Gastrocnemius medialis (tissue), 4 donors: ENCODE measurements at regions of chr2 and their contacts with region 1.

Region 1: DNA sequence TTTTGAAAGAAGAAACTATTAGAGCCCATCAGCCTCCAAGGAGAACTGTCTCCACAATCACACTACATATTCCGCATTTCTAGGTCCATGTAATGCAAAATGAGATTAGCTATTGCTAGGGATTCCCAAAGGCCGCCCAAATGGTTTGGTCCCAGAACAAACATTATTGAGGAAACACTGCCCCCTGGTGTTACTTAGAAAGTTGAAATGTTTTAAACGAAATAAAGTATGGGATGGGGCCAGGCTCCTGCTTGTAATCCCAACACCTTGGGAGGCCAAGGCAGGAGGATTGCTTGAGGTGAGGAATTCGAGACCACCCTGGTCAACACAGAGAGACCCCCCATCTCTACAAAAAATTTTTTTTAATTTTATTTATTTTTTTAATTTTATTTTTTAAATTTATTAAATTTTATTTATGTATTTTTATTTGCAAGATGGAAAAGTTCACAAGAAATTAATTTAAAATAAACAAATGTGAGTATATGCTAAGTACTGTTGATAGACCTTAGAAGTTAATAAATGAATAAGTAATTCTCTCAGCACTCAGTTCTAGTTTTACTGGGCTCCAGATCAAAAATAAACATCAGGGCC is 5.5 kb downstream of the NHEJ1 start:
- DNase-seq: no peak
- ATAC-seq: peak; percentile 41 to 66
- H3K4me3 ChIP-seq: no peak overlapping the region
- H3K27ac ChIP-seq: no peak overlapping the region
- H3K4me1 ChIP-seq: peaks cover 5 to 6% of the 10 kb centered on the region in 2 donors
- H3K27me3 ChIP-seq: no peaks in the 10 kb centered on the region
- CTCF ChIP-seq: peak; percentile 34 to 69 (median 60)
- POLR2A ChIP-seq: no peak

Region 2: GRCh38 chr2:218979846-218980734 is 175.1 kb before region 1 on chr2:
- in situ Hi-C with region 1: no loop called
- intact Hi-C with region 1: loop called (anchors 5 kb)
- DNase-seq: peak; percentile 40 to 62
- ATAC-seq: peak; percentile 77 to 83
- H3K4me3 ChIP-seq: peak overlapping the region; percentile 16 to 42 (median 30)
- H3K27ac ChIP-seq: no peak overlapping the region
- H3K4me1 ChIP-seq: peaks cover 27 to 31% of the 10 kb centered on the region in 2 donors
- H3K27me3 ChIP-seq: peaks cover 69 to 86% (median 79%) of the 10 kb centered on the region in 3 donors
- CTCF ChIP-seq: peak; percentile 41 to 94 (median 83)
- POLR2A ChIP-seq: no peak

Region 3: GRCh38 chr2:218995972-218996711 is 159.0 kb before region 1 on chr2:
- in situ Hi-C with region 1: no loop called
- intact Hi-C with region 1: loop called (anchors 1 kb)
- DNase-seq: peak; percentile 53 to 66
- ATAC-seq: peak; percentile 65 to 83
- H3K4me3 ChIP-seq: peak overlapping the region; percentile 39 to 53 (median 51)
- H3K27ac ChIP-seq: peak overlapping the region in 2 of 4 donors; percentile 62 to 81
- H3K4me1 ChIP-seq: peaks cover 10 to 18% of the 10 kb centered on the region in 2 donors
- H3K27me3 ChIP-seq: peaks cover 48 to 64% (median 54%) of the 10 kb centered on the region in 3 donors
- CTCF ChIP-seq: peak; percentile 59 to 96 (median 87)
- POLR2A ChIP-seq: peak; percentile 68 to 86

Region 4: DNA sequence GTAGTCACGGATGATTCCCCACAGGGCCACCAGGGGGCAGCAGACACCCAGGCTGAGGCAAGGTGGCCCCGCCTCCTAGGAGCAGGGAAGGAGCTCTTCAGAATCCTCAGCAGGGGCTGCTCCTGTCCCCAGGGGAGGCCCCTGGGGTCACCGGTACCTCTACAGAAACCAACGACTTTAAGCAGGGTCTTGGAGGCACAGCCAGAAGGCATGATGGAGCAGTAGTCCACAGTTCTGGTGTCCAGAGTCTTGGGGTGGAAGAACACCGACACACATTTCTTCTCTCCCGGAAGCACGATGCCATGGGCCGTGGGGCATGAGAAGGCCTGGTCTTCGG is 125.4 kb before region 1 on chr2:
- in situ Hi-C with region 1: loop called in 2 of 4 experiments (anchors 5 to 10 kb)
- intact Hi-C with region 1: loop called (anchors 1 kb)
- DNase-seq: peak; percentile 36 to 65
- ATAC-seq: peak; percentile 83 to 87
- H3K4me3 ChIP-seq: no peak overlapping the region
- H3K27ac ChIP-seq: no peak overlapping the region
- H3K4me1 ChIP-seq: no peaks in the 10 kb centered on the region
- H3K27me3 ChIP-seq: peaks cover 0 to 12% (median 9%) of the 10 kb centered on the region in 3 donors
- CTCF ChIP-seq: peak; percentile 64 to 97 (median 90)
- POLR2A ChIP-seq: no peak

Region 5: GRCh38 chr2:219057709-219058540 is 97.2 kb before region 1 on chr2:
- in situ Hi-C with region 1: loop called in 2 of 4 experiments (anchors 10 kb)
- intact Hi-C with region 1: loop called (anchors 1 kb)
- DNase-seq: peak; percentile 36 to 54
- ATAC-seq: peak; percentile 73 to 81
- H3K4me3 ChIP-seq: peak overlapping the region in 2 of 4 donors; percentile 10 to 40
- H3K27ac ChIP-seq: no peak overlapping the region
- H3K4me1 ChIP-seq: peaks cover 13 to 24% of the 10 kb centered on the region in 2 donors
- H3K27me3 ChIP-seq: peaks cover 70 to 81% (median 76%) of the 10 kb centered on the region in 3 donors
- CTCF ChIP-seq: peak; percentile 88 to 98 (median 93)
- POLR2A ChIP-seq: no peak

Region 6: GRCh38 chr2:219294356-219295351 is 139.5 kb after region 1 on chr2:
- in situ Hi-C with region 1: loop called (anchors 5 to 25 kb)
- intact Hi-C with region 1: loop called (anchors 1 kb)
- DNase-seq: peak; percentile 64 to 80
- ATAC-seq: peak; percentile 85 to 86
- H3K4me3 ChIP-seq: peak overlapping the region; percentile 57 to 63 (median 58)
- H3K27ac ChIP-seq: peak overlapping the region; percentile 68 to 82 (median 77)
- H3K4me1 ChIP-seq: peaks cover 8 to 10% of the 10 kb centered on the region in 2 donors
- H3K27me3 ChIP-seq: no peaks in the 10 kb centered on the region
- CTCF ChIP-seq: peak; percentile 95 to 99 (median 98)
- POLR2A ChIP-seq: peak in 1 of 2 donors; percentile 30